A673 (cell line): ENCODE measurements at regions of chrX and their contacts with region 1.

Region 1: DNA sequence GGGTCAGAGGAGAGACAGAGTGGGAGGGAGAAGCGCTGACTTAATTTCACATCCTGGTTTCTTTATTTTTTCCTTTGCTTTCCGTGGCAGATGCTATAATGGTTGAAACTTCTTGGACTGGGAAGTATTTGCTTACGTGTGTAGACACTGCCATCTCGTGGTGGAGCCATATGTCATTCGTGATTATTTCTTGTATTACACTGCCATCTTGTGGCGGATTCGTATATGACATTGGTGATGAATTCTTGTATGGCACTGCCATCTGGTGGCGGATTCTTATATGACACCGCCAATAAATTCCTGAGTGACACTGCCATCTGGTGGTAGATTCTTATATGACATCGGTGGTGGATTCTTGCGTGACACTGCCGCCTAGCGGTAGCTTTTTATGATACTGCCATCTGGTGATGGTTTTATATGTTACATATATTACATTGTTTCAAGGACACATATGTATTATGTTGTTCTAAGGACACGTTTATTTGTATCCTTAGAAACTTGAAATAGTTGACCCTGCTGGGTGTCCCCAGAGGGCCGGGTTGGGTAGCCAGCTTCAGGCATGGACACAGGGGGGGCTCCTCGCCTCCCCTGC is 37.3 kb upstream of the CLCN4 start:
- DNase-seq: peak; percentile 81
- H3K4me3 ChIP-seq: no peak overlapping the region
- H3K27ac ChIP-seq: no peak overlapping the region
- H3K4me1 ChIP-seq: no peaks in the 10 kb centered on the region
- H3K27me3 ChIP-seq: no peaks in the 10 kb centered on the region
- CTCF ChIP-seq: peak; percentile 100

Region 2: DNA sequence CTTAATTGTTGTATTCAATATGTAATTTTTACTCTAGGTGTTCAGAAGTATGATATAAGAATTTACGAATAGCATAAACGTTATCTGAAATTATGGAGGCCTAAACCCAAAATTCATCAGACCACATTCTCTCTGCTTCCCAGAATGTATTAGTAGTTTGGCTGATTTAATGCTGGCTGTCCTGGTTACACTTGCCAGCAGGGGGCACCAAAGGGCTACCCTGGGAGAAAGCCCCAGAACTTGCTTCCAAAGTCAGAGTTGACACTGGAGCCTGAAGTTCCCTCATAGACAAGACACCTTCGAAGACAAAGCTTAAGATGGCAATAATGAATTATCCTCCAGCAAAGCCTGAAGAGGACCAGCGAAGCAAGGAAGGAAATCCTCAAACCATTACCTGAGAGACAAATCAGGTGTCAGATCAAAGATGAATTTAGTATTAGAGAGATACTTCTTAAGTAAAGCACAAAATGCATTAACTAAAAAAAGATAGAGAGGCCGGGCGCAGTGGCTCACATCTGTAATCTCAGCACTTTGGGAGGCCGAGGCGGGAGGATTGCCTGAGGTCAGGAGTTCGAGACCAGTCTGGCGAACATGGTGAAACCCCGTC is 1376.3 kb before region 1 on chrX:
- CTCF ChIA-PET with region 1: no interaction called
- POLR2A ChIA-PET with region 1: no interaction called
- intact Hi-C with region 1: loop called (anchors 2 kb)
- DNase-seq: peak; percentile 64
- H3K4me3 ChIP-seq: no peak overlapping the region
- H3K27ac ChIP-seq: no peak overlapping the region
- H3K4me1 ChIP-seq: no peaks in the 10 kb centered on the region
- H3K27me3 ChIP-seq: no peaks in the 10 kb centered on the region
- CTCF ChIP-seq: peak; percentile 83

Region 3: DNA sequence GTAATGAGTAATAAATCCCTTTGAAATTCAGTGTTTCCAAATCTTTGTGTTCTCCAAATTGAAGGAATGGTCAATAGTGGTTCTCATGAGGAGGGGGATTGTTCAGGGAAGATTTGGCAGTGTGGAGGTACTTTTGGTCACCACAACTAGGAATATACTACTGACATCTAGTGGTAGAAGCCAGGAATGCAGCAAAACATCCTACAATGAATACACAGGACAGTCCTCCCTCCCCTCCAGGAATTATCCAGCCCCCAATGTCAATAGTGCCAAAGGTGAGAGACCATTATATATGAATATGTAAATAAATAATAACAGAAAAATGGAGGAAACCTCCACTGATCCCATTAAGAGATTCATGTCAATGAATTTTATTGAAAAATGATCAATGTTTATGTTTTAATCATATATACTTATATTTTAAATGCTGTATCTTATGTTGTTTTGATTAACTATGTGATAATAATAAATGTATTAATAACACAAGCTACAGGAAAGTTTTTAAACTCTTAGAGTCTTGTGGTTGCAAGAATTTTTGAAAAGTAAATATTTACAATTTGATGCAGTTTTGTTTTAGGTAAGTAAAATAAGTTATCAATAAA is 1303.9 kb before region 1 on chrX:
- CTCF ChIA-PET with region 1: no interaction called
- POLR2A ChIA-PET with region 1: no interaction called
- intact Hi-C with region 1: loop called (anchors 2 kb)
- DNase-seq: peak; percentile 64
- H3K4me3 ChIP-seq: no peak overlapping the region
- H3K27ac ChIP-seq: no peak overlapping the region
- H3K4me1 ChIP-seq: no peaks in the 10 kb centered on the region
- H3K27me3 ChIP-seq: no peaks in the 10 kb centered on the region
- CTCF ChIP-seq: peak; percentile 78

Region 4: DNA sequence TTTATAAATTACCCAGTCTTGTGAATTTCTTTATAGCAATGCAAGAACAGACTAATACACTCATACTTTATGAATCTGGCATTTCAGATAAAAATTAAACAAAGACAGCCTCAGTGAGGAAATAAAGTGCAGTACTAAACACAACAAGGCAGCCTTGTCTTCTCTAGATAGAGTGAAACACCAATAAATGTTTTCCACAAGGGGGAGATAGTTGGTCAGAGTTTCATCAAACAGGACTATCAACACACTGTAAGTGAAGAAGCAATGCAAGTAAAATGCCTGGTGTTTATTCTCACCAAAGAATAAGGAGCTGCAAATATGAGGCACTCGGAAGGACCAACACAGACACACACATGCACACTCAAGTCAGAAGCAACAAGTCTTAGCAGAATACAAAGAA is 1148.4 kb before region 1 on chrX:
- CTCF ChIA-PET with region 1: no interaction called
- POLR2A ChIA-PET with region 1: no interaction called
- intact Hi-C with region 1: loop called (anchors 10 kb)
- DNase-seq: peak; percentile 60
- H3K4me3 ChIP-seq: no peak overlapping the region
- H3K27ac ChIP-seq: no peak overlapping the region
- H3K4me1 ChIP-seq: no peaks in the 10 kb centered on the region
- H3K27me3 ChIP-seq: no peaks in the 10 kb centered on the region
- CTCF ChIP-seq: peak; percentile 52; the same call in 1 of the 2 replicates

Region 5: GRCh38 chrX:9141496-9141895 is 978.0 kb before region 1 on chrX:
- CTCF ChIA-PET with region 1: no interaction called
- POLR2A ChIA-PET with region 1: no interaction called
- intact Hi-C with region 1: no loop called
- DNase-seq: no peak
- H3K4me3 ChIP-seq: no peak overlapping the region
- H3K27ac ChIP-seq: no peak overlapping the region
- H3K4me1 ChIP-seq: peaks cover 12% of the 10 kb centered on the region
- H3K27me3 ChIP-seq: no peaks in the 10 kb centered on the region
- CTCF ChIP-seq: no peak

Region 6: DNA sequence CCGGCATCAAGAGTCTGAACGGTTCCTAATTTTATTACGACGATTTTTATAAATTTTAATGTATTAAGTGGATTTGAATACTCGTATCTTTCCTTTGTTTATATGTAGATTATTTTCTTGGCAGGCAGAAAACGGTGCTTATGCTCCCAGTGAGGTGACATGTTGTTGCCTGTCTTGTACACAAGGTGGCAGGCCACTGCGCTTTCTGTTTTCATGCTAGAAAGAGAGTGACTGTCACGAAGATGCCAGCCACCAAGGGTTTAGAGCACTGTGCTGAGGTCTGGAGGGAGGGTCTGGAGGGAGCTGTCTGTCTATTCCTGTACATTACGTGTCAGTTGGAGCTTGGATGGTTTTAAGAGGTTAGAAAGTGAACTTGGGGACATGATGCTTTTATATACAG is 245.5 kb before region 1 on chrX:
- CTCF ChIA-PET with region 1: no interaction called
- POLR2A ChIA-PET with region 1: interaction called, 4 read pairs
- intact Hi-C with region 1: loop called (anchors 1 kb)
- DNase-seq: peak; percentile 69
- H3K4me3 ChIP-seq: no peak overlapping the region
- H3K27ac ChIP-seq: no peak overlapping the region
- H3K4me1 ChIP-seq: no peaks in the 10 kb centered on the region
- H3K27me3 ChIP-seq: no peaks in the 10 kb centered on the region
- CTCF ChIP-seq: peak; percentile 73

Region 7: DNA sequence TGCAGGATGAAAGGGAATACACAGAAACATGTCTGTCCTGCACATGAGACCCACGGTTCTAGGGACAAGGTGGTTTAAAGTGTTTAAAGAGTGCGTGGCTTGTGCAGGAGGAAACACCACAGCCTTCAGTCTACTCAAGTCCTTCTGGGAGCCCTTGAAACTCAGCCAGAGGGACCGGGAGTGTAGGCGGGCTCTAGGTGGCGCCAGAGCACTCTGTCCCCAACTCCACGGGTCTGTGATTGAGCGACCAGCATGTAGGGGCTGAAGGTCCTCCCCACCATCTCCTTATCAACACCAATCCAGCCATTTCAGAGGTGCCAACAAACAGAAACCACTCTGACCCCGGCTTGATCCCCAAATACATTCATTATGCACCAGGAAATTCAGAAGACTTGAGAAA is 234.3 kb before region 1 on chrX:
- CTCF ChIA-PET with region 1: interaction called, 3 read pairs
- POLR2A ChIA-PET with region 1: no interaction called
- intact Hi-C with region 1: loop called (anchors 1 kb)
- DNase-seq: peak; percentile 77
- H3K4me3 ChIP-seq: no peak overlapping the region
- H3K27ac ChIP-seq: no peak overlapping the region
- H3K4me1 ChIP-seq: no peaks in the 10 kb centered on the region
- H3K27me3 ChIP-seq: no peaks in the 10 kb centered on the region
- CTCF ChIP-seq: peak; percentile 80

Region 8: DNA sequence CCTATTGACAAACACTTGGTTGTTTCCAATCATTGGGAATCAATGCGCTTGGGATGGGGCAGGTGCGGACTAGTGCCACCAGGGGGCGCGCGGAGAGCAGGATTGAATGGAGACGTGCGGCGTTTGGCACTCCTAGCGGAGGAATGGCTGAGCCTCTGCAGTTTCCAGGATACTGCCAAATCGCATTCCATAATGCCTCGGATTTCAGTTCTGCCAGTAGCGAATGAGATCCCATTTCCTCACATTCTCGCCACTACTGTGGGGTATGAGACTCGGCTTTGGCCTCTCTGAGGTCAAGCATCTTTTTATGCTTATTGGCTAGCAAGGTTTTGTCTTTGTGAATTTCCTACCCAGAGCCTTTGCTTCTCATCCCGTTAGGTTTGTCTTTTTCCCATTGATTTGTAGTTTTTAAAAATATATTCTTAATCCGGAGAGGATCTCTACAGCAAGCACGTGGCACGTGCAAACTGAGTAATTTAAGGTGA is 123.6 kb before region 1 on chrX:
- CTCF ChIA-PET with region 1: interaction called, 4 read pairs
- POLR2A ChIA-PET with region 1: no interaction called
- intact Hi-C with region 1: loop called (anchors 1 kb)
- DNase-seq: peak; percentile 83
- H3K4me3 ChIP-seq: no peak overlapping the region
- H3K27ac ChIP-seq: no peak overlapping the region
- H3K4me1 ChIP-seq: no peaks in the 10 kb centered on the region
- H3K27me3 ChIP-seq: no peaks in the 10 kb centered on the region
- CTCF ChIP-seq: peak; percentile 95

Region 9: GRCh38 chrX:10017866-10018265 is 101.6 kb before region 1 on chrX:
- CTCF ChIA-PET with region 1: no interaction called
- POLR2A ChIA-PET with region 1: no interaction called
- intact Hi-C with region 1: no loop called
- DNase-seq: peak; percentile 54
- H3K4me3 ChIP-seq: no peak overlapping the region
- H3K27ac ChIP-seq: no peak overlapping the region
- H3K4me1 ChIP-seq: peaks cover 14% of the 10 kb centered on the region
- H3K27me3 ChIP-seq: no peaks in the 10 kb centered on the region
- CTCF ChIP-seq: no peak